Mammary epithelial cell (primary cell): ENCODE measurements at regions of chr6 and their contacts with region 1.

Region 1: GRCh38 chr6:51959744-51960383 is 127.5 kb downstream of the PKHD1 start:
- DNase-seq: peak; percentile 55
- H3K4me3 ChIP-seq: no peak overlapping the region
- H3K27ac ChIP-seq: no peak overlapping the region
- H3K4me1 ChIP-seq: no peaks in the 10 kb centered on the region
- H3K27me3 ChIP-seq: no peaks in the 10 kb centered on the region
- CTCF ChIP-seq: peak; percentile 87 to 94

Region 2: DNA sequence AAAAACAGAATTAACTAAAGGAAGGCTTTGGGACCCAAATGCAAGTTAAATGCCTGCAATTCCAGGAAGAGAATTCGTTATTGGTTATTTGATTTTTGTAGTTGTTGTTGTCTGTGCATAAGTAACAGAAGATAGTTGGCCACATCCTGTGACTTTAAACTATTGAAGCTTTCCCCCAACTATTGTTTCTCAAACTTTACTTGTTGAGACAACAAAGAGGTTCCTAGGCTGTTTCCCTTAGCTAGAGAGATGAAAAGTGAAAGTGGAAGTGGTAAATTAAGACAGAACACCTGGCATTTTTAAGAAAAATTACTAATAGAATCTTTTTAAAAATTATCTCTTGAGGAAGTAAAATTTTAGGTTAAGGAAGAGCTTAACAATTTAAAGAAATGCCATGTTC is 397.7 kb before region 1 on chr6:
- CTCF ChIA-PET with region 1: no interaction called
- dilution Hi-C with region 1: no loop called
- in situ Hi-C with region 1: loop called (anchors 10 to 25 kb)
- intact Hi-C with region 1: loop called (anchors 2 kb)
- DNase-seq: no peak
- H3K4me3 ChIP-seq: no peak overlapping the region
- H3K27ac ChIP-seq: no peak overlapping the region
- H3K4me1 ChIP-seq: no peaks in the 10 kb centered on the region
- H3K27me3 ChIP-seq: no peaks in the 10 kb centered on the region
- CTCF ChIP-seq: no peak

Region 3: DNA sequence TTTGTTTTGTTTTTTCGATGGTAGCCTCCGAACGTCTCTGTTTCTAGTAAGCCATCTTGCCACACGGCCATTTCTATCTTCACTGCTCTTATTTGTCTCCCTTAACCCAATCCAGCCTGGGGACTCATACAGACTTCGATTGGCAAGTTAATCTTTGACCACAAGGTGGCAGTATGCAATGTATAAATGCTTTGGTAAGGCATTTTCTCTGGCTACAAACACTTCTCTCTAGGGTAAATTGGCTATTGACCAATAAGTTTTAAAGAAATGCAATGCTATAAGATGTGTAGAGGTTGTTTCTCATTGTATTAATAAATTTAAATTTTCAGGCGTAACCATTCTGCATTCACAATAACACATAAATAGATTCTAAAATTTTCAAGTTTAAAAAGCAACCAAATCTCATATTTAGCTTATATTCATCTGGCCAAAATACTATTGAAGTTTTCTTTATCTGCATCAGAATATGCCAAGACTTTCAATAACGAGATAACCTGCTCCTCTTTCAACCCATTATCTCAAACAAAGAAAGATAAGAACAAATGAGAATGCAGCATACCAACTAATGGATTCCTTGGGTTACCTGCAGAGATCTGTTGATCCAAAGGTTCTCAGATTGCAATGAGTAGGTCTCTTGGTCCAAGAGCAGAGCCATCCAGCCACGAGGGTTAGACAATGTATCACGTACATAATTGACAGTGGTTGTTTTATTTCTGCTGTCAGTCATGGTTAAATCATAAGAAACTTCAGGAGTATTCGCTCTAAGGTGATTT is 104.4 kb before region 1 on chr6:
- CTCF ChIA-PET with region 1: interaction called, 3 read pairs
- dilution Hi-C with region 1: no loop called
- in situ Hi-C with region 1: loop called (anchors 10 kb)
- intact Hi-C with region 1: loop called (anchors 1 kb)
- DNase-seq: peak; percentile 41
- H3K4me3 ChIP-seq: no peak overlapping the region
- H3K27ac ChIP-seq: no peak overlapping the region
- H3K4me1 ChIP-seq: no peaks in the 10 kb centered on the region
- H3K27me3 ChIP-seq: peaks cover 2% of the 10 kb centered on the region
- CTCF ChIP-seq: peak; percentile 61 to 67

Region 4: DNA sequence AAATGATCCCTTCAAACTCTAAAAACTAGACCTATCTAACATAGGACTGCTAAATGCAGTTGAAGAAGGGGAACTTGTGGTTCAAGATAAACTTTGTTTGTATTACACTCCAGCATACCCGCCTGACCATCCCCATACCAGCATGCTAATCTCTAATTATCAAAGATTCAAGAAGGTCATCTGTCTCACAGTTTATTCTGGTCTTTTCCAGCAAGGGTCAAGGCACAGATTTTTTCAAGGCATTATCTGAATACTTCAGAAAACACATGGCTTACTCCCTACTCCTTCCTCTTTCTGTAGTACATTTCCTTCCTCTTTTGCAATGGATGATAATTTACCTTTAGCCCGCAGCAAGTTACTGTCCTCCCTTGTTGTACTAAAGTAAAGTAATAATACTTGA is 46.6 kb before region 1 on chr6:
- CTCF ChIA-PET with region 1: no interaction called
- dilution Hi-C with region 1: no loop called
- in situ Hi-C with region 1: no loop called
- intact Hi-C with region 1: no loop called
- DNase-seq: no peak
- H3K4me3 ChIP-seq: no peak overlapping the region
- H3K27ac ChIP-seq: no peak overlapping the region
- H3K4me1 ChIP-seq: no peaks in the 10 kb centered on the region
- H3K27me3 ChIP-seq: no peaks in the 10 kb centered on the region
- CTCF ChIP-seq: no peak

Region 5: GRCh38 chr6:51928320-51928719 is 31.5 kb before region 1 on chr6:
- CTCF ChIA-PET with region 1: interaction called, 10 read pairs
- dilution Hi-C with region 1: no loop called
- in situ Hi-C with region 1: no loop called
- intact Hi-C with region 1: no loop called
- DNase-seq: no peak
- H3K4me3 ChIP-seq: no peak overlapping the region
- H3K27ac ChIP-seq: no peak overlapping the region
- H3K4me1 ChIP-seq: no peaks in the 10 kb centered on the region
- H3K27me3 ChIP-seq: no peaks in the 10 kb centered on the region
- CTCF ChIP-seq: no peak

Region 6: DNA sequence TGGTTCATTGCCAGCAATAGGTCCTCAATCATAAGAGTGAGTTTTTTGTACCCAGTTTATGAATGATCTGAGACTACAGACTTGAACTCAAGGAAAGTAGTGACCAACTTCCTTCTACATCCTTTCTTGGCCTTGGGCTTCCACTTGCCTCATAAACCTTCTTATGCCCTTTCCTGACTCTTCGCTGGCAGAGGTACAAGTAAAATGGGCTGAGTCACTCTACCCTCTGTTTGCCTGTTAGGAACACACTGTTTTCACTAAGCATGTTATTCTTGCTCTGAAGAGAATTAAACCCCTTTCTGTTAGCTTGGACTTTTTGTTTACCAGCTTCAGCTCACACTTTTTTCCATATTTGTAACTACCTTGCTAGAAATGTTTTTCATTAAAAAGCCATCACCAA is 53.2 kb after region 1 on chr6:
- CTCF ChIA-PET with region 1: no interaction called
- dilution Hi-C with region 1: loop called (anchors 5 kb)
- in situ Hi-C with region 1: no loop called
- intact Hi-C with region 1: no loop called
- DNase-seq: peak; percentile 26
- H3K4me3 ChIP-seq: no peak overlapping the region
- H3K27ac ChIP-seq: no peak overlapping the region
- H3K4me1 ChIP-seq: no peaks in the 10 kb centered on the region
- H3K27me3 ChIP-seq: no peaks in the 10 kb centered on the region
- CTCF ChIP-seq: no peak

Region 7: DNA sequence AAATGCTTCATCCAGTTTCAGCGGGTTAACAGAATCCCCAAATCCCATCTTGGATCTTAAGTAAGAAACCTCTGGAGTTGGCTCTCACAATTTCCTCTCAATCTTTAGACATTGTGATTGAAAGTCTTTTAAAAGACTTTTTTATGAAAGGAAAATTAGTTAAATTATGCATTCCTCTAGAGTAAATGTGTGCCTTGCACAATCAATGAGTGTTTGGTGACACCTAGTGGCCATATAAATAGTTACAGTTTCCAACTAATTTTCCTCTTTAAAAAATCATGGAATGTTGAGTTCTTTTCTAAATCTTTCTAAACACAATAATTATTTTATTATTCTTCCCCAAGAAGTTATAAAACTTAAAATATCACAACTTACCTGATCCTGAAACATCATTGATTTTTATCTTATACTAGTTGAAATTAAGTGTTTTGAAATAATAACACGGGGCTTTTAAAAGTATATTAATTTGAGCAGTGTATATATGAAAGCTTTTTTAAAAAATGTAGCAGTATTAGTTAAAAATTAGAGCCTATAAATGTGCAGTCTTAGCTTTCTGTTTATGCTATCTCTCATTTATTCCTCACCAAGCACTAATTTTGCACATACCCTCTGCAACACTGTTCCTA is 61.2 kb after region 1 on chr6:
- CTCF ChIA-PET with region 1: no interaction called
- dilution Hi-C with region 1: no loop called
- in situ Hi-C with region 1: no loop called
- intact Hi-C with region 1: loop called (anchors 5 kb)
- DNase-seq: peak; percentile 10
- H3K4me3 ChIP-seq: no peak overlapping the region
- H3K27ac ChIP-seq: no peak overlapping the region
- H3K4me1 ChIP-seq: no peaks in the 10 kb centered on the region
- H3K27me3 ChIP-seq: peaks cover 2% of the 10 kb centered on the region
- CTCF ChIP-seq: peak; percentile 56 to 65

Region 8: GRCh38 chr6:52042141-52042885 is 82.4 kb after region 1 on chr6:
- CTCF ChIA-PET with region 1: no interaction called
- dilution Hi-C with region 1: no loop called
- in situ Hi-C with region 1: no loop called
- intact Hi-C with region 1: no loop called
- DNase-seq: no peak
- H3K4me3 ChIP-seq: no peak overlapping the region
- H3K27ac ChIP-seq: no peak overlapping the region
- H3K4me1 ChIP-seq: no peaks in the 10 kb centered on the region
- H3K27me3 ChIP-seq: no peaks in the 10 kb centered on the region
- CTCF ChIP-seq: no peak